Heart right ventricle (tissue), 16 donors: ENCODE measurements at regions of chr10 and their contacts with region 1.

Region 1: GRCh38 chr10:75508239-75508813 is 76.9 kb downstream of the LRMDA start:
- DNase-seq: no peak
- ATAC-seq: no peak
- H3K4me3 ChIP-seq: no peak overlapping the region
- H3K27ac ChIP-seq: no peak overlapping the region
- H3K4me1 ChIP-seq: peaks cover 0 to 36% (median 17%) of the 10 kb centered on the region in 9 donors
- H3K27me3 ChIP-seq: no peaks in the 10 kb centered on the region
- CTCF ChIP-seq: no peak

Region 2: DNA sequence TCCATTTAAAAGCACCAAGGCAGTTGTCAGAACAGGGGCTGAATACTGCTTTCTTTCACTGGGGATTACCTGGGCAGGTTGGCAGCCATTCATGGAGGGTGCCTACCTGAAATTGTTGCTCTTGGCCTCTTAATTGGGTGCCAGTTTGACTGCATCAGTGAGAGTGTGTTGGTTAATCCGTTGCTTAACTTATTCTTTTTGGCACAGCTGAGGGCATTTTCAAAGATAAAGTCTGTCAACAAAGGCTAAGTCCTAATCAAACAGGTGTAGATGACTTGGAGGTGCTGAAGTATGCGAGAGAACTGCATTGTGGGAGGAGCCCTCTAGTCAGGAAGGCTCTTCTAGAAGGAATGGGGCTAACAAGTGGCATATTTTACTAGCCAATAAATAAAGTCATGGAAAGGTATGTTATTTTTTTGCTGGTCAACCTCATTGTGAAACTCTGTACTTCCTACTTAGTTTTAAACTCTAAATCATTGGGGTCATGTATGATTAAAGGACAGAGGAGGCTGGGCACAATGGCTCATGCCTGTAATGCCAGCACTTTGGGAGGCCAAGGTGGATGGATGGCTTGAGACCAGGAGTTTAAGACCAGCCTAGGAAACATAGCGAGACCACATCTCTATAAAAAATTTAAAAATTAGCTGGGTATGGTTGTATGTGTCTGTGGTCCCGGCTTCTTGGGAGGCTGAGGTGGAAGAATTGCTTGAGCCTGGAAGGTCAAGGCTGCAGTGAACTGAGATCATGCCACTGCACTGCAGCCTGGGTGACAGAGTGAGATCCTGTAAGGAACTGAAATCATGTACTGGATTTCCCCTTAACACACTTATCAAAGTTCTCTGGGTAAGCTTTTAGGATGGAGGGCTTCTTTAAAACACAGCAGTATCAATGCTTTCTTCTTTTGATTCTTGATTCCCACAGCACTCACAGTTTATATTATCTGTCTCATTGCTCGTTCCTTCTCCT is 57.2 kb after region 1 on chr10:
- intact Hi-C with region 1: loop called in 1 of 10 experiments (anchors 2 kb)
- DNase-seq: no peak
- ATAC-seq: no peak
- H3K4me3 ChIP-seq: no peak overlapping the region
- H3K27ac ChIP-seq: no peak overlapping the region
- H3K4me1 ChIP-seq: no peaks in the 10 kb centered on the region
- H3K27me3 ChIP-seq: no peaks in the 10 kb centered on the region
- CTCF ChIP-seq: no peak